Endothelial cell of umbilical vein (primary cell): ENCODE measurements at regions of chr1 and their contacts with region 1.

Region 1: GRCh38 chr1:156500797-156501499 is 373 bp upstream of the MEF2D start:
- DNase-seq: peak; percentile 94
- H3K4me3 ChIP-seq: peak overlapping the region; percentile 76 to 95 (median 88)
- H3K27ac ChIP-seq: peak overlapping the region; percentile 100
- H3K4me1 ChIP-seq: peaks cover 63% of the 10 kb centered on the region
- H3K27me3 ChIP-seq: no peaks in the 10 kb centered on the region
- CTCF ChIP-seq: peak; percentile 48 to 49
- POLR2A ChIP-seq: peak; percentile 70

Region 2: DNA sequence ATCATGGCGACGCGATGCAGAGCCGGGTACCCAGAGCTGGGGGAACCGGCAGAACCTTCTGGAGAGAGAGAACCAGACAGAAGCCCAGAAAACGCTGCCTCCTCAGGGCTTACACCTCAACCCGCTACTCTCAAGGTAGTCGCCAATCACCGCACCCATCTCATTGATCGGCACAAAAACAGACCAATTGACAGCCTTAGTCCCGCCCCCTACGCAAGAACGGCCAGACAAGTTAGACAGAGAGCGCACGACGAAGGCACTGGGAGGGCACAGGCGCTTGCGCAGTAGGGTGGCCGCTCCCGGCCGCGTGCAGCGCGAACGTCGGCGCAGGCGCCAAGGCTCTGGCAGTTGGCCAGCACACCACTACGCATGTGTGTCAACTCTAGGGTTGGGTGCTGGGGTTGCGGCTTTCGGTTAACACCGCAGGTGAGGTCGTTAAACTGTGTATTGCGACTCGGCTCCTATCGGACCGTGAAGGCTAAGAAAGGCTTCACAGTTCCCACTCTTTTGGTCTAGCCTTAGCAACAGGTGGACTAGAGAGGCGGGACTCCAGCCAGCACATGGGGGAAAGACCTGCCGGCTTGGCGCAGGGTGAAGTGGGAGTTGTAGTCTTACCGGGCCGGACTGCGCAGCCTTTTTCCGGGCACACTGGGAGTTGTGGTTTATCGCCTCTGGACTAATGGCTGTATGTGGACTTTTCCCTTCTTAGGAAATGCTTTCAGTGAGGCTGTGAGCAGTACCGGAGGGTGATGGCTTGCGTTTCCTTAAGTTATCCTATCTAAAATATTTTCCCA is 162.6 kb before region 1 on chr1 and contains the starts of genes CCT3 and TSACC:
- CTCF ChIA-PET with region 1: no interaction called
- POLR2A ChIA-PET with region 1: no interaction called
- dilution Hi-C with region 1: no loop called
- intact Hi-C with region 1: loop called (anchors 1 kb)
- DNase-seq: peak; percentile 100
- H3K4me3 ChIP-seq: peak within 1 kb of the TSS; percentile 57 to 92 (median 57)
- H3K27ac ChIP-seq: peak within 1 kb of the TSS; percentile 9
- H3K4me1 ChIP-seq: peaks cover 15% of the 10 kb centered on the region
- H3K27me3 ChIP-seq: peaks cover 2 to 3% of the 10 kb centered on the region in 2 experiments
- CTCF ChIP-seq: no peak
- POLR2A ChIP-seq: peak; percentile 93
- total RNA-seq, gene CCT3: 330 and 367 TPM in 2 replicates
- total RNA-seq, gene TSACC: 0.69 TPM in 1 of 2 replicates, not detected in the other

Region 3: DNA sequence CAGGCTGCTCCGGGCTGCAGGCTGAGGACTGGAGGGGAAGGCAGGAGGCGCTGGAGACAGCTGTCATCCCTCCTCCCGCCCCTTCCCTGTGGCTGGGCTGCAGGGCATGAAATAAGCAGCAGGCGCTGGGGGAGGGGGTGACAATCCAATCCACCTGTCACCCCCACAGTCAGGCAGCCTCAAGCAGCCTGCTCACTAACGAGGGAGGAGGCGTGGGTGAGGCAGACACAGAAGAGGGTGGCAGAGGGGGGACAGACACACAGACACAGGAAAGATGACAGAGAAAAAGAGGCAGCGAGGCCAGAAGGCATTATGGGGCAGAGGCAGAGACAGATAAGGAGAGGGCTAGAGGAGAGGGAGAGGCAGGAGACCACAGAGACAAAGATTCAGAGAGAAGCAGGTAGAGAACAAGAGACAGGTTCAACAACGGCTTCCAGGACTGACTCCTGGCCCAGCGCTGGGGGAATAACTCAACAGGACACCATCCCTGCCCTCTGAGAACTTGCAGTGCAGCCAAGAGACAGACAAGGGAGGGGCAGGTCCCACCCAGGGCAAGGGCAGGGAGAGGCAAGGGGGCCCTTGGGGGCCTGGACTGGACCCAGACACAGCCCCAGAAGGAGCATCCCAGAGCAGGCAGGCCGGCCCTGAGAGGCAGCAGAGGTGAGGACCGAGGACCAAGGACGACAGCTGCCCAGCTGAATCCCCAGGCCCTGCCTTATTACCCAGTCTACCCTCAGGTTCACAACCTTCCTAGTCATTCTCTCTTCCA is 11.6 kb before region 1 on chr1:
- CTCF ChIA-PET with region 1: interaction called, 16 read pairs
- POLR2A ChIA-PET with region 1: interaction called, 9 read pairs
- dilution Hi-C with region 1: no loop called
- intact Hi-C with region 1: loop called (anchors 1 kb)
- DNase-seq: no peak
- H3K4me3 ChIP-seq: no peak overlapping the region
- H3K27ac ChIP-seq: no peak overlapping the region
- H3K4me1 ChIP-seq: peaks cover 21% of the 10 kb centered on the region
- H3K27me3 ChIP-seq: no peaks in the 10 kb centered on the region
- CTCF ChIP-seq: no peak
- POLR2A ChIP-seq: no peak

Region 4: GRCh38 chr1:156591432-156592157 is 90.6 kb after region 1 on chr1 and contains the start of gene NAXE:
- CTCF ChIA-PET with region 1: interaction called, 3 read pairs
- POLR2A ChIA-PET with region 1: no interaction called
- dilution Hi-C with region 1: no loop called
- intact Hi-C with region 1: loop called (anchors 5 kb)
- DNase-seq: peak; percentile 67
- H3K4me3 ChIP-seq: peak within 1 kb of the TSS; percentile 52 to 77 (median 75)
- H3K27ac ChIP-seq: peak within 1 kb of the TSS; percentile 32
- H3K4me1 ChIP-seq: peaks cover 17% of the 10 kb centered on the region
- H3K27me3 ChIP-seq: no peaks in the 10 kb centered on the region
- CTCF ChIP-seq: no peak
- POLR2A ChIP-seq: peak; percentile 93
- total RNA-seq, gene NAXE: 74.0 and 76.2 TPM in 2 replicates

Region 5: DNA sequence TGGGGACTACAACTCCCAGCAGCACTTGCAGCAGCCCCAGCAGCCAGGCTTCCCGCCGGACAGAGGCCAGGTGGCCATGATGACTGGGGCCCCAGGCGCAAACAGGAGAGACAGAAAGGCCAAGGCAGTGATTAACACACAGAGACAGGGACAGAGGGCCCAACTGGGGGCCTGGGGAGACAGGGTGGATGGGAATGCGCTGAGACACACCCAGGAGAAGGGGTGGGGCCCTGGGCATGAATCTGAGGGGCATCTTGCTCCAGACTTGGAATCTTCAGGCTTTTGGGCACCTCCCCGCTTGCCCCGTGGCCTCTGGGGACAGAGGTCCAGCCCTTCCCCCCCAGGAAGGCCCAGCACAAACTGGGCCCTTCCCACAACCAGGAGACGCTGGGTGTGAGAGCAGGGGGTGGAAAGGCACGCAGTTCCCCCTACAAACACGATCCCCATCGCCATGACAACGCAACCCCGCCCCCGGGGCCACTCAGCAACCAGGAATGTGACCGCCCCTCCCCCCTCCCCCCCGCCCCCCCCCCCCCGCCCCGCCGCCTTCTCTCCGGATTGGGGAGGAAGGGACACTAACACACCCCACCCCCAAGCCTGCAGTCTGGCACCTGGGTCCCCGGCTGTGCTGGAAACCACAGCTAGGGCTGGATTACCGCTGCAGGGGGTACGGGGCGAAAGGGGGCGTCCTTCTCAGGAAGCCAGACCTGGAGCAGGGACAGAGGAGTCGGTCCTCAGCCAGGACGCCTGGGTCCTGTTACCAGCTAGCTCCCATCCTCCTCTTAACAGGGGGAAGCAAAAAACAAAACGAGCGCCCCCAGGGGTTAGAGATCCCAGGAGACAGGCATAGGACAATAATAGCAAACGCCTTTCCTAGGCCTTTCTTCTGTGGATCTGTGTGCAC is 246.0 kb after region 1 on chr1:
- CTCF ChIA-PET with region 1: no interaction called
- POLR2A ChIA-PET with region 1: no interaction called
- dilution Hi-C with region 1: no loop called
- intact Hi-C with region 1: loop called (anchors 5 kb)
- DNase-seq: peak; percentile 77
- H3K4me3 ChIP-seq: peak overlapping the region in 2 of 3 experiments; percentile 44 to 92
- H3K27ac ChIP-seq: peak overlapping the region; percentile 99
- H3K4me1 ChIP-seq: peaks cover 41% of the 10 kb centered on the region
- H3K27me3 ChIP-seq: no peaks in the 10 kb centered on the region
- CTCF ChIP-seq: peak in 1 of 2 donors; percentile 22
- POLR2A ChIP-seq: peak; percentile 66

Region 6: GRCh38 chr1:156797212-156797871 is 296.4 kb after region 1 on chr1:
- CTCF ChIA-PET with region 1: no interaction called
- POLR2A ChIA-PET with region 1: no interaction called
- dilution Hi-C with region 1: no loop called
- intact Hi-C with region 1: no loop called
- DNase-seq: peak; percentile 75
- H3K4me3 ChIP-seq: no peak overlapping the region
- H3K27ac ChIP-seq: no peak overlapping the region
- H3K4me1 ChIP-seq: no peaks in the 10 kb centered on the region
- H3K27me3 ChIP-seq: no peaks in the 10 kb centered on the region
- CTCF ChIP-seq: peak; percentile 61 to 72
- POLR2A ChIP-seq: no peak